ENCODE measurements at regions of chr7 and their contacts with region 1.

Region 1: DNA sequence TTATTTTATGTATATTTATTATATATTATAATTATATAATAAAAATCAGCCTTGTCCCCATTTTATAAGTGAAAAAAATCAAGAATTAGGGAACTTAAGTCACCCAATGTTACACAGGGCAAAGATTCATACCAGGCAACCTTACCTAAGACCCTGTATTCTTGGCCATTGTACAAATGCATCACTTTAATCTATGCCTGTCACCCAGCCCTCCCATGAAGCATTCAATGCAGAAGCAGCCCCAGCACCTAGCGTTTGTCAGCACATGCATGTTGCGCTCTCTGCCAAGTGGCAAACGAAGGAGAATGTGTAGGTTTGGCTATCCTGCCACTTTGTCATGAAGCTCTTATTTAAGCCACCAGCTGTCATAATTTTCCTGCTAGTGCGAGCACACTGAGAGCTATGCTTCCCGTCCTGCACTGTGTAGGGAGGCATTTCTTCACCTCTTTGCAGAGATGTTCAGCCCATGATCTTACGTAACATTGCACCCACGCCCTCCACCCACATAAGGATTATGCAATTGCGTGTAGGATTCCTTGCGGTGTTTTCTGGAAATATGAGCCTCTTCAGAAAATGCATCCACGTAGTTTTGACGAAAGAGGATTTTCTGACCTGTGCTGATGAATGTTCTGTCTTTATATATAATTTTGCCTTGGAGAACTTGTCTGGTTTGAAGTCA is 7.7 kb upstream of the COBL start:
- DNase-seq: peak in 1 of 2 experiments; percentile 37
- H3K4me3 ChIP-seq: no peak overlapping the region
- H3K27ac ChIP-seq: no peak overlapping the region
- H3K4me1 ChIP-seq: peaks cover 17 to 40% (median 32%) of the 10 kb centered on the region in 4 experiments
- H3K27me3 ChIP-seq: peaks cover 0 to 3% (median 0%) of the 10 kb centered on the region in 4 experiments; a peak in 1 of 7 replicates
- CTCF ChIP-seq: no peak
- EP300 ChIP-seq: no peak
- POLR2A ChIP-seq: no peak
- RAD21 ChIP-seq: no peak

Region 2: DNA sequence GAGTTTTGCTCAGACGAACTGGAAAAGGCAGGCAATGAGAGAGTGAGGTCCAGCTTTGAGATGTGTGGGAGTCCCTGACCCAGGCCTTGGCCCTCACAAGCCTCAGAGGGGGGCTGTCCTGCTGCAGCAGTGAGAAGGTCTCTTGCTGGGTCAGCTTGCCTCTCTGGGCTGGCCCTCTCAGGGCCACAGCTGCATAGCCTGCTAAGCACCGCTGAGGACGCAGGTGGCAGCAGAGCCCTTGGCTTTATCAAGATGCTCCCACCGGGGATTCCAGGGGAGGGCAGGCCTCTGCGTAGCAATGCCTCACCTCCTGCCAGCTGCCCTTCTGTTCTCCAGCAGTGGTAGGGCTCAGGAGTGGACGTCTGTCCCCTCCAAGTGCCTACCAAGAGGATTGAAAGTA is 136.4 kb before region 1 on chr7:
- CTCF ChIA-PET with region 1: interaction called, 7 read pairs
- POLR2A ChIA-PET with region 1: interaction called, 11 read pairs
- DNase-seq: peak; percentile 50 to 82
- H3K4me3 ChIP-seq: no peak overlapping the region
- H3K27ac ChIP-seq: no peak overlapping the region
- H3K4me1 ChIP-seq: peaks cover 0 to 7% (median 4%) of the 10 kb centered on the region in 4 experiments; a peak in 4 of 7 replicates
- H3K27me3 ChIP-seq: no peaks in the 10 kb centered on the region
- CTCF ChIP-seq: peak; percentile 86 to 97 (median 90)
- EP300 ChIP-seq: no peak
- POLR2A ChIP-seq: no peak
- RAD21 ChIP-seq: peak; percentile 95

Region 3: DNA sequence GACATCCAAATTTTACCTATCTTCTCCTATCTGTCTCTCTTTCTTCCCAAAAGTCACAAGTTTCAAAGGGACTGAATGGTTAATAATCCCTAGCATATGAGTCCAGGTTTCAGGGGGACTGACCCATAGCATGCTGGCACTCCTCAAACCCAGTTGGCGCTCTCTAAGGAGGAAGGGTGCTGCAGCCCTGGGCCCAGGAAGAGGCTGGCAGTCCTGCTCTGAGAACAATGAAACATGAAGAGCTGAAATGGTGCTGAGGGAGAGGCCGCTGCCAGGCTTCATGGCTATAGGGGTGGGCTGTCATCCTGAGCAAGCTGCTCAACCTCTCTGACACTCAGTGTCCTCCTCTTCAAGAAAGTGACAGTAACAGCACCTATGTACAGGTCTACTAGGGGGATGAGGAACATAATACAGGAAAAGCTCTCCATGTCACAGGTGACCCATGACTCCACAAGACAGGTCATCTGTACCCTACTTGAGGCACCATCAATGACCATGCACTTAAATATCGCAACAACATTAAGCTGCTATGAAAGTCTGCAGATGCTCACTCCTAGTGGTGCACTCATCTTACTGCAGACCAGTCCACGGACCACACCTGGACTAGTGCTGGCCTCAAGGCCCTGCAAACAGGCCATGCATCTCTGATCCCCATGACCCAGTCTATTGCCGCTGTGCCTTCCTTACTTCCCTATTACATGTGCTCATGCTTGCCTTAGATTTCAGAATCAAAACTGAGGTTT is 24.8 kb before region 1 on chr7:
- CTCF ChIA-PET with region 1: interaction called, 5 read pairs
- POLR2A ChIA-PET with region 1: interaction called, 10 read pairs
- DNase-seq: no peak
- H3K4me3 ChIP-seq: no peak overlapping the region
- H3K27ac ChIP-seq: no peak overlapping the region
- H3K4me1 ChIP-seq: peaks cover 0 to 6% (median 5%) of the 10 kb centered on the region in 4 experiments; a peak in 3 of 7 replicates
- H3K27me3 ChIP-seq: no peaks in the 10 kb centered on the region
- CTCF ChIP-seq: peak in 2 of 3 experiments; percentile 6 to 38; a peak in 2 of 4 replicates
- EP300 ChIP-seq: no peak
- POLR2A ChIP-seq: no peak
- RAD21 ChIP-seq: peak; percentile 4 to 12; a peak in 1 of 4 replicates

Region 4: DNA sequence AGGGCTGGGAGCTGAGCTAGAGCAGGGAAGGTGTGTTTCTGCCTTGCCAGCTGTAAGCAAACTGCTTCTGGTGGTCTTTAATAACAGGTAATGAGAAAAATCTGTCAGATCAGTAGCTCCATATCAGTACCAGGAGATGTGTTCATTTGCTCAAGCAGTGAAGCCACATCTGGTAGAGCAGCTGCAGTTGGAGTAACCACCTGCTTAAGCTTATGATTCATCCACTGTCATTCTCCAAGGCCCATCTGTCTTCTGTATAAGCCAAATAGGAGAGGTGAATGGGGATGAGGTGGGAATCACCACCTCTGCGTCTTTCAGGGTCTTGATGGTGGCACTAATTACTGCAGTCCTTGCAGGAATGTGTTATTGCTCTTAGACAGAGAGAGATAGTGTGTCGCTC is 10.7 kb after region 1 on chr7:
- CTCF ChIA-PET with region 1: interaction called, 4 read pairs
- POLR2A ChIA-PET with region 1: interaction called, 98 read pairs
- DNase-seq: peak in 1 of 2 experiments; percentile 37
- H3K4me3 ChIP-seq: no peak overlapping the region
- H3K27ac ChIP-seq: no peak overlapping the region
- H3K4me1 ChIP-seq: no peaks in the 10 kb centered on the region
- H3K27me3 ChIP-seq: no peaks in the 10 kb centered on the region
- CTCF ChIP-seq: no peak
- EP300 ChIP-seq: no peak
- POLR2A ChIP-seq: no peak
- RAD21 ChIP-seq: no peak

Region 5: DNA sequence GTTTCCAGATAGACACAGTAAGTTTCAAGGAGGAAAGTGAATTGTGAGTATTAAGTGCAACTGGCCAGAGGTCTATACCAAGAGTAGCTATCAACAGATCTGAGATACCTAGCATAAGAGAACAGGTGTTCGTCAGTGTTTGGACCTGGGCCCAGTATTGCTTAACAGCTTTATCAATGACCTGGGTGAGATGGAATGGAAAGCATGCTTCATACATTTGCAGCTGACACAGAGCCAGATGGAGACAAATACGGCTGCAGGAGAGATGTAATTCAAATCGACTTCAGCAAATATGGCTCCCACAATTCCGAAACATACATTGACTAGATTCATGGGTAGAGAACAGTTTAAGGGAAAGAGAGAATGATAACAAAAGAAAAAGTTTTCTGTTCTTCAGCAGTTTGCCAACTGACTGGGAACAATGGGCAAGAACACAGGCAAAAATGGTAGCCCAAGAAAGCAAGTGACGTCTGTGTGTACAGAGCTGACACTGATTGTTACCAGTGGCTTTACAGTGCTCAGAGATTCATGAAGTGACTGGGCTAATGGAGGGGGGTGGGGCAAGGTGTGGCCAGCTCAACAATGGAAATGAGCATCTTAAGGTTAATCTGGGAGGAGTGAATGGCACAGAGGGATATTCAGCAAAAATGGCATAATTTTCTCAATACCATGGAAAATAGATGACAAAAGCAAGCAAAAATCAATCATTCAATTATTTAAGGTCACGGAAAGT is 20.2 kb after region 1 on chr7:
- CTCF ChIA-PET with region 1: interaction called, 42 read pairs
- POLR2A ChIA-PET with region 1: interaction called, 98 read pairs
- DNase-seq: no peak
- H3K4me3 ChIP-seq: no peak overlapping the region
- H3K27ac ChIP-seq: no peak overlapping the region
- H3K4me1 ChIP-seq: no peaks in the 10 kb centered on the region
- H3K27me3 ChIP-seq: no peaks in the 10 kb centered on the region
- CTCF ChIP-seq: no peak
- EP300 ChIP-seq: no peak
- POLR2A ChIP-seq: no peak
- RAD21 ChIP-seq: no peak

Region 6: GRCh38 chr7:51350200-51350921 is 26.0 kb after region 1 on chr7:
- CTCF ChIA-PET with region 1: interaction called, 42 read pairs
- POLR2A ChIA-PET with region 1: interaction called, 98 read pairs
- DNase-seq: no peak
- H3K4me3 ChIP-seq: no peak overlapping the region
- H3K27ac ChIP-seq: no peak overlapping the region
- H3K4me1 ChIP-seq: peaks cover 0 to 3% (median 0%) of the 10 kb centered on the region in 4 experiments; a peak in 2 of 7 replicates
- H3K27me3 ChIP-seq: no peaks in the 10 kb centered on the region; a peak in 1 of 7 replicates
- CTCF ChIP-seq: no peak
- EP300 ChIP-seq: no peak
- POLR2A ChIP-seq: no peak
- RAD21 ChIP-seq: no peak

Region 7: GRCh38 chr7:51357821-51358220 is 33.5 kb after region 1 on chr7:
- CTCF ChIA-PET with region 1: interaction called, 42 read pairs
- POLR2A ChIA-PET with region 1: interaction called, 40 read pairs
- DNase-seq: no peak
- H3K4me3 ChIP-seq: no peak overlapping the region
- H3K27ac ChIP-seq: no peak overlapping the region
- H3K4me1 ChIP-seq: peaks cover 0 to 5% (median 0%) of the 10 kb centered on the region in 4 experiments; a peak in 4 of 7 replicates
- H3K27me3 ChIP-seq: no peaks in the 10 kb centered on the region
- CTCF ChIP-seq: no peak
- EP300 ChIP-seq: no peak
- POLR2A ChIP-seq: no peak
- RAD21 ChIP-seq: no peak

Measured in H1 (cell line).